Panc1 (cell line): ENCODE measurements at regions of chr9 and their contacts with region 1.

Region 1: GRCh38 chr9:73173557-73174329 is 22.1 kb downstream of the ANXA1 start:
- DNase-seq: no peak
- ATAC-seq: no peak
- H3K4me3 ChIP-seq: no peak overlapping the region
- H3K27ac ChIP-seq: no peak overlapping the region
- H3K4me1 ChIP-seq: no peaks in the 10 kb centered on the region
- H3K27me3 ChIP-seq: no peaks in the 10 kb centered on the region
- CTCF ChIP-seq: no peak

Region 2: GRCh38 chr9:72812559-72813111 is 361.1 kb before region 1 on chr9:
- CTCF ChIA-PET with region 1: no interaction called
- POLR2A ChIA-PET with region 1: no interaction called
- in situ Hi-C with region 1: no loop called
- intact Hi-C with region 1: no loop called
- DNase-seq: no peak
- ATAC-seq: no peak
- H3K4me3 ChIP-seq: no peak overlapping the region
- H3K27ac ChIP-seq: no peak overlapping the region
- H3K4me1 ChIP-seq: no peaks in the 10 kb centered on the region
- H3K27me3 ChIP-seq: no peaks in the 10 kb centered on the region
- CTCF ChIP-seq: no peak

Region 3: GRCh38 chr9:73132034-73132776 is 41.5 kb before region 1 on chr9:
- CTCF ChIA-PET with region 1: interaction called, 3 read pairs
- POLR2A ChIA-PET with region 1: interaction called, 11 read pairs
- in situ Hi-C with region 1: no loop called
- intact Hi-C with region 1: no loop called
- DNase-seq: no peak
- ATAC-seq: peak; percentile 92
- H3K4me3 ChIP-seq: peak overlapping the region; percentile 45 to 63
- H3K27ac ChIP-seq: peak overlapping the region; percentile 77
- H3K4me1 ChIP-seq: peaks cover 19% of the 10 kb centered on the region
- H3K27me3 ChIP-seq: no peaks in the 10 kb centered on the region
- CTCF ChIP-seq: no peak